Mammary epithelial cell (primary cell): ENCODE measurements at regions of chr15 and their contacts with region 1.

Region 1: GRCh38 chr15:34209421-34210282 is at the start of gene KATNBL1:
- DNase-seq: peak; percentile 92
- H3K4me3 ChIP-seq: peak within 1 kb of the TSS; percentile 79 to 98 (median 87)
- H3K27ac ChIP-seq: peak within 1 kb of the TSS; percentile 89
- H3K4me1 ChIP-seq: peaks cover 23% of the 10 kb centered on the region
- H3K27me3 ChIP-seq: no peaks in the 10 kb centered on the region
- CTCF ChIP-seq: peak; percentile 81 to 93
- total RNA-seq, gene KATNBL1: 50.7 to 55.8 TPM

Region 2: DNA sequence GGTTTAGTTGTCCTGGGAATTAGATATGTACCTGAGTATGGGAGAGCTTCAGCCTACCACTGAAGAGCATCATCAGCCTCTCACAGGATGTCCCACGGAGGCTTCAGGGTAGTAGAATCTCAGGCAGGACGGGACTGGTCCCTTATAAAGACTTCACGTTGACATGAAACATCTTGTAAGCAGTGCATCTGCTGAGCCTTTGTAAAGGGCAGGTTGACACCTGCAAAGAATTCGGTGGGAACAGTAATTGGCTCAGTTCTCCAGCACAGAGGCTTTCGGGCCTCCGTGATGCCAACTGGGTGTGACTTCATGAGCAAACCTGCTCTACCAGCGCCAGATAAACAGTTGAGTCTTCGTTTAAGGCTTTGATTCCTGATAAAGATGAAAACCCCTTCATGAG is 143.7 kb before region 1 on chr15:
- CTCF ChIA-PET with region 1: interaction called, 11 read pairs
- dilution Hi-C with region 1: no loop called
- in situ Hi-C with region 1: loop called in 1 of 2 experiments (anchors 10 kb)
- intact Hi-C with region 1: loop called (anchors 1 kb)
- DNase-seq: peak; percentile 90
- H3K4me3 ChIP-seq: no peak overlapping the region
- H3K27ac ChIP-seq: no peak overlapping the region
- H3K4me1 ChIP-seq: peaks cover 13% of the 10 kb centered on the region
- H3K27me3 ChIP-seq: no peaks in the 10 kb centered on the region
- CTCF ChIP-seq: no peak

Region 3: DNA sequence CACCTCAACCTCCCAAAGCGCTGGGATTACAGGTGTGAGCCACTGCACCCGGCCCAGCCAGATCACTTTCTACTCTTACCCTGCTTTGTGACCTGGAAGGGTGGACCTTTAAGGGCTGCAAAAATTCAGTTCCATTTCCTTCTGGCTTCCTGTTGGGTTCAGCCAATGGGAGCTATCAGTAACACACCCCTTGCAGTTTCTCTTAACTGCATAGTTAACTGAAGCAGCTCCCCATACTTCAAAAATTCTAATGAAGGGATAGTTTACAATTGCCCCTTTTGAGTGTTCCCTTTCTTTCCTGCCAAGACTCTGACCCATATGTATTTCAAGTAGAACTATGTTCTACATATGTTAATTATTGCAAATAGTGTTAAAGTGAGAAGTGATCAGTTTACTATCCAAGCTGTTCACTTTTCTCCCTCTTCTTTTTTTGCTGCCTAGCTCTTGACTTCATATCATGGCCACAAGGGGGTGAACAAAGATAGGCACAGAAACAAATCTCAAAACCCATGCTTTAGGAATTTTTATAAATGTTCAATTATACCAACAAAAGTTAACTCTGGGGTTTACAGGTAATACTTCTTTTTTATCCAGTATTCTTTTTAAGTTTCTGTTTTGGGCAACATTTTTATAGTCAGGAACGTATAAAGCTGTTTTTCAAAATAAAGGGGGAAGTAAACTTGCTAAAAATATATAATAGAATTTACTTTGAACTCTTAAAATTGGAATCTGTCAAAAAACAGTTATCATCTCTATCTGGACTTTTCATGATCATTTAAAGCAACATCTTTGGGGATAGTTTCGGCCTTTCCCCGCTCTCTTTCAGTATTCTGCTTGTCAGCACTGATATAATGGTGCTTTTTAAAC is 99.6 kb before region 1 on chr15:
- CTCF ChIA-PET with region 1: interaction called, 9 read pairs
- dilution Hi-C with region 1: no loop called
- in situ Hi-C with region 1: loop called (anchors 10 kb)
- intact Hi-C with region 1: loop called (anchors 1 kb)
- DNase-seq: peak; percentile 21
- H3K4me3 ChIP-seq: no peak overlapping the region
- H3K27ac ChIP-seq: no peak overlapping the region
- H3K4me1 ChIP-seq: no peaks in the 10 kb centered on the region
- H3K27me3 ChIP-seq: no peaks in the 10 kb centered on the region
- CTCF ChIP-seq: peak; percentile 58 to 77

Region 4: GRCh38 chr15:34161329-34161955 is 48.2 kb before region 1 on chr15:
- CTCF ChIA-PET with region 1: no interaction called
- dilution Hi-C with region 1: loop called (anchors 5 kb)
- in situ Hi-C with region 1: no loop called
- intact Hi-C with region 1: no loop called
- DNase-seq: peak; percentile 41
- H3K4me3 ChIP-seq: no peak overlapping the region
- H3K27ac ChIP-seq: no peak overlapping the region
- H3K4me1 ChIP-seq: no peaks in the 10 kb centered on the region
- H3K27me3 ChIP-seq: no peaks in the 10 kb centered on the region
- CTCF ChIP-seq: no peak

Region 5: GRCh38 chr15:34241372-34242330 is 32.0 kb after region 1 on chr15:
- CTCF ChIA-PET with region 1: no interaction called
- dilution Hi-C with region 1: no loop called
- in situ Hi-C with region 1: no loop called
- intact Hi-C with region 1: loop called (anchors 2 kb)
- DNase-seq: peak; percentile 62
- H3K4me3 ChIP-seq: no peak overlapping the region
- H3K27ac ChIP-seq: peak overlapping the region; percentile 99
- H3K4me1 ChIP-seq: peaks cover 29% of the 10 kb centered on the region
- H3K27me3 ChIP-seq: no peaks in the 10 kb centered on the region
- CTCF ChIP-seq: peak; percentile 82 to 88

Region 6: DNA sequence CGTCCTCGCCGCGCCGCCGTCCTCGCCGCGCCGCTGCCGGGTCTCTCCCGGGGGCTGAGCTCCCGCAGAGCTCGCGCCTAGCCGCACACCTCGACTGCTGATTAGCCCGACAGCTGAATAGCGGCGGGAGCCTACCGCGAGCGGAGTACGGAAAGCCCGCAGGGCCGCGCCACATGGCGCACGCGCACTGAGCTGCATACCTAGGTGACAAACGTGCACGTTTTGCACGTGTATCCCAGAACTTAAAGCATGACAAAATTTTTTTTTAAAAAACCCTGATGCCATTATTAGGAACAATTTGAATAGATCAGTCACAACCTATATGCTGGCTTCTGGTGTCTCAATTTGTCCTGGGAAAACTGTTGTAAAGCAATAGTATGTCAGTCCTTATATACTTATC is 228.0 kb after region 1 on chr15 and contains the start of gene GOLGA8A:
- CTCF ChIA-PET with region 1: no interaction called
- dilution Hi-C with region 1: no loop called
- in situ Hi-C with region 1: no loop called
- intact Hi-C with region 1: no loop called
- DNase-seq: peak; percentile 55
- H3K4me3 ChIP-seq: peak within 1 kb of the TSS; percentile 60 to 83 (median 70)
- H3K27ac ChIP-seq: no peak within 1 kb of the TSS
- H3K4me1 ChIP-seq: peaks cover 6% of the 10 kb centered on the region
- H3K27me3 ChIP-seq: peaks cover 2% of the 10 kb centered on the region
- CTCF ChIP-seq: no peak
- total RNA-seq, gene GOLGA8A: 24.0 to 159 TPM